Right ventricle myocardium superior (tissue), 1 donor: ENCODE measurements at regions of chr2 and their contacts with region 1.

Region 1: GRCh38 chr2:119702918-119703401 is 24.0 kb downstream of the TMEM177 start:
- DNase-seq: peak; percentile 75
- ATAC-seq: peak; percentile 89

Region 2: GRCh38 chr2:119823734-119824334 is 120.9 kb after region 1 on chr2:
- intact Hi-C with region 1: loop called (anchors 5 kb)
- DNase-seq: no peak
- ATAC-seq: peak; percentile 76

Region 3: DNA sequence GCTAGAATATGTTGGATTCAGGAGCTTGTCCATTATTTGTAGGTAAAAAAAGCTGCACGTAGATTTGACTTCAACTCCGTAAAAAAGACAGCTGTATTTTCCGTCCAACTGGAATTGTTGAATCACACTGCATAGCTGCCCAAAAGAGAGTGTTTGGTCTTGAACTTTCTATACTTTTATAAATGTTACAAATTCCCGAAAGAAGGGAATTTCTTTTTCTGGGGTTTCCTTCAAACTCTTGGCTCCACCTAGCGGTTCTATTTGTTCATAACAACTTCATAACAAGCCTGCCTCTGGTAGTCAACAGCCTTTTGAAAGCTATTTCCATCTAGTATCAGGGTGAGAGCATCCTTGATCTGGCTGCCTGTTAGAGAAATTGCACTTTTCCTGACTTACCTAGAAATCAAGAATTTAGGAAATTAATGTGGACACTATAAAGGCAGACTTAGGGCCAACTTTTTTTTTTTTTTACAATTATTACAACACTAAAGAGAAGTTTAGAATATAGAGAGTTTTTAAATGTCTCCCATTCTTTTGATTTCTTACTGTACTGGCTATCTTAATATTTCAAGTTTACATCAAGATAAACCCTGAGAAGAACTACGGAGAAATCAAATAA is 472.1 kb after region 1 on chr2:
- intact Hi-C with region 1: loop called (anchors 10 kb)
- DNase-seq: no peak
- ATAC-seq: peak; percentile 61

Region 4: GRCh38 chr2:120675460-120676130 is 972.6 kb after region 1 on chr2:
- intact Hi-C with region 1: loop called (anchors 10 kb)
- DNase-seq: peak; percentile 70
- ATAC-seq: peak; percentile 62